ENCODE measurements at regions of chr2 and their contacts with region 1.

Region 1: DNA sequence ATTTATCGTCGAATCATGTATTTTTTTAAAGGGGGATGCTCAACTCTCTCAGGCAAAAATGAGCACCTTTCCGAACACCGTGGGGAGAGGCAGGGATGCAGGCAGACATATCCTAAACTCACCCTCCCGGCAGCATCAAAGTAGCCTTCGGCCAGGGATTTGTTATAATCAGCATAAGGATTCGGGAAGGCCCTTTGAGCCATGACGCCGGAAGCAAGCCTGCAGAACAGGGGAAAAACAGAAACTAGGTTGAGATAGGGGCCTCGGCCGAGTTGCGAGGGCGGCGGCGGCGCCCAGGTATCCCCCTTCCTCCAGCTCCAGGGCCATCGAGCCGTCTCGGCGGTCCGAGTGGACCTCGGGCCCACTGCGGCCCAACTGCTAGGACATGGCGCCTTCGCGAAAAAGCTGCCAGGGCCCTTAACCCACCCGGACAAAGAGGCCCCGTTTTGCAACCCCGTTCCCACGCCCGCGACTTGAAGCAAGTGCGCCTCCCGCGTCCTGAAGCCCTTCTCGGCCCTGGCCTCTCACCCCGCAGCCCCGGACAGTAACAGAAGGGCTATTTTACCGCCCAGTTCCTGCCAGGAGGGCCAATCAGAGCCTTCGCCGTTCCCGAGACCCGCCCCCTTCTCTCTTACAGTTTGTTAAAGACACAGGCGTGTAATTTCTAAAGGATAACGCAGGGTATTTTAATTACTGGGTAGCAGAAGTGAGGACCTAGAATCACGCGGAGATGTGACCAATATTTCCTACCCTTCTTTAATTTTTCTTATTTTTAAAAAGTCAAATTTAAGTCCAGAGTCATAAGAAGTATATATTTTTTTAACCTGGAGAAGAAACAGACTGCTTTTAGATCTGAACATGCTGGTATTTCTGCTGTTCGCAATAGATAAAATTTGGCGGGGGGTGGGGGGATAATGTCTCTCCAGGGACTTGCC is at the start of gene LANCL1:
- DNase-seq: peak; percentile 91
- H3K4me3 Mint-ChIP-seq: peak within 1 kb of the TSS; percentile 97
- H3K27ac Mint-ChIP-seq: peak within 1 kb of the TSS; percentile 95
- H3K4me1 Mint-ChIP-seq: peaks cover 49% of the 10 kb centered on the region
- H3K27me3 Mint-ChIP-seq: no peaks in the 10 kb centered on the region
- total RNA-seq, gene LANCL1: 39.1 to 42.9 TPM

Region 2: DNA sequence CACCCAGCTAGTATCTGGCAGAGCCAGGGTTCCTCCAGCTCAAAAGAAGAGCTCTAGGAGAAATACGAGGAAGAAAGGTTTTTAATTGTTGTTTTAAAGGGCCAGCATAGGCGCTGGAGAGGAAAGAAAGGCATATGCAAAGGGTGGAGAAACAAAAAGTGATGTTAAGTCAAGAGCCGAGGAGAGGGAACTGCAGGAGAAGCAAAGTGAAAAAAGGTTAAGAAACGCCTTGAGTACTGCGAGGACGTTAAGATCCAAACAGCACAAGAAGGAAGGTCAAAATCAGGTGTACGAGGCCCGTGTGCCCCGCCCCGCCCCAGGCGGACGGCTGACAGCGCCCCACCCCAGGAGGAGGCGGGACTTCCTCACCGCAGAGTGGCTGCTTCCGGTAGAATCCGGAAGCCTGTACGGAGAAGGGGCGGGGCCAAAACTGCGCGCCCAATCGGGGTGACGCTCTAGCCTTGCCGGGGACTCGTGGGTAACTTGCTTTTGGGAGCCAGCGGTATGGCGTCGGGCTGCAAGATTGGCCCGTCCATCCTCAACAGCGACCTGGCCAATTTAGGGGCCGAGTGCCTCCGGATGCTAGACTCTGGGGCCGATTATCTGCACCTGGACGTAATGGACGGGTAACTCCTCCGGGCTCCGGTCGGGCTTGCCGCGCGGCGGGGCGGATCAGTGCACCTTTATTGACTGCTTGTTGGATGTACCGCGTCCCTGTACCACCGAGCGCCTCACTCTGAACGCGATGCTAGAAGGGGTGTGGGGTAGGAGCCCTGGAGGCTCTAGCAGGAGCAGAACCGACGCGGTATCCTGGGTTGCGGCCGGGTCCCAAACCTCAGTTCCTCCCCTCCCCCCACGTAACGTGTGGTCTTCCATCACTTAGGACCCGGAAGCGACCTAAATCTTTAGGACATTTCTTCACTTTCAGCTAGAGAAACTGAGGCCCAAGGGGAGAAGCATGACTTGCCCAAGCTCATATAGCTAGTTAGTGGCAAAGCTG is 474.0 kb before region 1 on chr2 and contains the start of gene RPE:
- CTCF ChIA-PET with region 1: no interaction called
- POLR2A ChIA-PET with region 1: no interaction called
- intact Hi-C with region 1: loop called (anchors 2 kb)
- DNase-seq: peak; percentile 98
- H3K4me3 Mint-ChIP-seq: peak within 1 kb of the TSS; percentile 96
- H3K27ac Mint-ChIP-seq: peak within 1 kb of the TSS; percentile 81
- H3K4me1 Mint-ChIP-seq: peaks cover 51% of the 10 kb centered on the region
- H3K27me3 Mint-ChIP-seq: peaks cover 3% of the 10 kb centered on the region
- total RNA-seq, gene RPE: 46.3 to 48.0 TPM

Region 3: GRCh38 chr2:210171309-210172203 is 304.9 kb before region 1 on chr2 and contains the start of gene KANSL1L:
- CTCF ChIA-PET with region 1: no interaction called
- POLR2A ChIA-PET with region 1: no interaction called
- intact Hi-C with region 1: loop called (anchors 1 kb)
- DNase-seq: peak; percentile 97
- H3K4me3 Mint-ChIP-seq: peak within 1 kb of the TSS; percentile 94
- H3K27ac Mint-ChIP-seq: peak within 1 kb of the TSS; percentile 96
- H3K4me1 Mint-ChIP-seq: peaks cover 26% of the 10 kb centered on the region
- H3K27me3 Mint-ChIP-seq: peaks cover 3% of the 10 kb centered on the region
- total RNA-seq, gene KANSL1L: 4.0 to 4.6 TPM

Region 4: DNA sequence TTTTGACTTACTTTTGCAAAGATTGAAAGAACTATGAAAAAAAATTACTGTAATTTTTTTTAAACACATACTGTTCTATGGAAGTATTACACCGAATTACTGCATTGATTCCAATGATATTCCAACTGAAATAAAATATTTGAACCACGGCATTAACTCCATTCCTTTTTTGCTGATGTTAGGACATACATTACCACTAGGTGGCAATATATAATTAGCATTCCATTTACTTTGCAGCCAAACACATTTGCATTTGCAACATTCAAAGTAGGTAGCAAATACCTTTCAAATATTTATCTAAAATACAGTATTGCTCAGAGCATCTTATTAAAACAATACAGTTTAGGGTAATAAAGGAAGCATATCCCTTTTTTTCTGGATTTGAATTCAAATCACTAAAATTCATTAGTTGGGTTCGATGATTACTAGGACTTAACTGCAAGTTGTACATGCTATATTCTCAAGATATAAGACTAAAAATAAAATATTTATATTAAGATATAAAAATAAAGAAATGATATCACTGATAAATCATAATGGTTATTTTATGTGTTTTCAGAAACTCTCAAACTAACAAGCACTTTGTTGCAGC is 31.2 kb before region 1 on chr2:
- CTCF ChIA-PET with region 1: no interaction called
- POLR2A ChIA-PET with region 1: no interaction called
- intact Hi-C with region 1: loop called (anchors 2 kb)
- DNase-seq: no peak
- H3K4me3 Mint-ChIP-seq: no peak overlapping the region
- H3K27ac Mint-ChIP-seq: no peak overlapping the region
- H3K4me1 Mint-ChIP-seq: peaks cover 5% of the 10 kb centered on the region
- H3K27me3 Mint-ChIP-seq: no peaks in the 10 kb centered on the region

Region 5: DNA sequence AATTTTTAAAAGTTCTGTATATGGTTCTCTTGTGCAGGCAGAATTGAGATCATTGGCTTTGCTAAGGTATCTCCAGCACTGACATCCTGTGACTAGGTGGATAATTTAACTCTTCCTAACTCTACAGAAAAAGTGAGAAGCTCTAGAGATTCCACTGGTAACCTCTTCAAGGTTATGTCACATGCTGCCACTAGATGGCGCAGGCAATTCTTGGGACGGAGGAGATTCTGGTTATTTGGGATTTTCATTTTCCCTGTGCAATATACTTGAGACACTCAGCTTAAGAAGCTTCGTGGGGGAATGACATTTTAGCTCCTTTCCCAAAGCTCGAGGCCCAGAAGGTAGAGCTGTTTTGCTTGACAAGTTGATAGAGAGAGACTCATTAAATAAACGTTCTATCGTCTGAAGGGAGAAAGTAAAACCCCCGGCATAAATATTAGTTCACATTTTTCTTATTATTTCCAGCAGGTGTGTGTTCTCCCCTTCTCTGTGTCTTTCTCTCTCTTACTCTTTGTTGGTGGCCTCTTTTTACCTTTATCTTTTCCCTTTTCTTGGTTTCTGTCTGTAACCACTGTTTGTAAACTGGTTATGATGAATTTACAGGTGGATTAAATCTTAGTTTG is 26.7 kb after region 1 on chr2:
- CTCF ChIA-PET with region 1: interaction called, 14 read pairs
- POLR2A ChIA-PET with region 1: no interaction called
- intact Hi-C with region 1: no loop called
- DNase-seq: peak; percentile 38
- H3K4me3 Mint-ChIP-seq: no peak overlapping the region
- H3K27ac Mint-ChIP-seq: no peak overlapping the region
- H3K4me1 Mint-ChIP-seq: peaks cover 8% of the 10 kb centered on the region
- H3K27me3 Mint-ChIP-seq: peaks cover 30% of the 10 kb centered on the region

Measured in activated CD4-positive, alpha-beta memory T cell treated with anti-CD3 and anti-CD28 coated beads for 36 hours (primary cell).